ENCODE measurements at regions of chr5 and their contacts with region 1.

Region 1: DNA sequence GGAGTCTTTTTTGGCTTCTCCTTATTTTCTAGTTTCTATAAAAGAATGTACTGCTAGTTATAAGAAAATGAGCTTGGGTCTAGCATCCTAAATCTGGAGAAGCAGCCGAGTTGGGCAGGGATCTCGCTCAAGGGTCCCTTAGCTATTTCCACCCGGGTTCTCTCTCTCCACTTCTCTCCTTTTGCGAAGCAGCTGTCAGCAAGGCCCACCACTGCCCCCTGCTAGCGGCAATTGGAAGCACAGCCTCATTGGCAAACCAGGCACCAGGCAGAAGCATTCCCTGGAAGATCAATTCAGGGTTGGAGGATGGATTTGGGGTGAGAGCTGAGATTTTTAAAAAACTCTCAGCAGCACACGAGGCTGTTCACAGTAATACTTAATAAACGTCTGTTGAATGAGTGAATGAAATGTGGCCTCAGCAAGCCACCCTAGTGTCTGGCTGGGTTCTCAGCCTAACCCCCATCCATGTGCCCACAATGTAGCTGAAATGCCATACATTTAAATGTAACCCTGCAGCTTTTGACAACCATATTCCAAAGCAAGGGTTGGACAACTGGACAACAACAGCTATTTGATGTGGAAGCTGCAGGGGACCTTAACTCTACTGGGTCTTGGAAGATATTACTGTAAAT is 34.6 kb upstream of the TNIP1 start:
- DNase-seq: peak; percentile 84
- H3K4me3 Mint-ChIP-seq: no peak overlapping the region
- H3K27ac Mint-ChIP-seq: no peak overlapping the region
- H3K4me1 Mint-ChIP-seq: peaks cover 3% of the 10 kb centered on the region
- H3K27me3 Mint-ChIP-seq: no peaks in the 10 kb centered on the region

Region 2: DNA sequence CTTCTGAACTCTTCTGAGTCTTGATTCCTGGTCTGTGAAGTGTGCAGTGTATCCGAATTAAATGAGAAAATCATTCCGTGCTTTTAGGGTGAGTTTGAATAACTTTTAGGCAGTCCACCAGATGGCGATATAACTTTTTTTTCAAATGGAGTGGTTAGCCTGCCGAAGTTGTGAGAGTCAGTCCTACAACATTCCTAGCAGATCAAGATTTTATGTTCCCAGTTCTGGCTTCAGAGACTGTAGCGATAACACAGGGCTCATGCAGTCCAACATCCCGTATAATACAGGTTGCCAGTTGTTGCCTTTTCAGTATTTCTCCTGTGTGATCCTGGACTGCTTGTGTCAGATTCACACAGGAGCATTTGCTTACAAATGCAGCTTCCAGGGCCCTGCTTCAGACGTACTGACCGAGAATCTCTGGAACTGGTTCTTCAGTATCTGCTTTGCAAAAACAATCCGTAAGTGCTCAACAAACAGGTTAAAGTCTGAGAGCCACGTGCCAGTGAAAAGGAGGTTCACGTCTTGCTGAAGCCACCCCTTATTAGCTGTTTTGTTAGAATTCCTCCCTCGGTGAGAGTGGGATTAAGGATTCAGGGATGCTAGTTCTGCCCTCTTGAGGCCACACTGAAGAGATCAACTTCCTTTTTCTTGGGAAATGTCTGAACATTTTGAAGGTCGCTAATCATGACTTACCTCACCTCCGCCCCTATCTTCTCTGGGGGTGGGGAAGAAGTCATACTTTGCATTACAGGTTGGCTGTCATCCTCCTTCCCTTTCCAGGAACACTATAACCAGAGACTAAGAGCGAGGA is 314.1 kb before region 1 on chr5:
- CTCF ChIA-PET with region 1: interaction called, 5 read pairs
- intact Hi-C with region 1: loop called (anchors 1 kb)
- DNase-seq: peak; percentile 31
- H3K4me3 Mint-ChIP-seq: no peak overlapping the region
- H3K27ac Mint-ChIP-seq: no peak overlapping the region
- H3K4me1 Mint-ChIP-seq: peaks cover 31% of the 10 kb centered on the region
- H3K27me3 Mint-ChIP-seq: no peaks in the 10 kb centered on the region

Region 3: GRCh38 chr5:151040211-151040747 is 75.1 kb before region 1 on chr5:
- CTCF ChIA-PET with region 1: interaction called, 13 read pairs
- intact Hi-C with region 1: no loop called
- DNase-seq: no peak
- H3K4me3 Mint-ChIP-seq: no peak overlapping the region
- H3K27ac Mint-ChIP-seq: no peak overlapping the region
- H3K4me1 Mint-ChIP-seq: peaks cover 11% of the 10 kb centered on the region
- H3K27me3 Mint-ChIP-seq: no peaks in the 10 kb centered on the region

Region 4: GRCh38 chr5:151068433-151069197 is 46.8 kb before region 1 on chr5:
- CTCF ChIA-PET with region 1: interaction called, 19 read pairs
- intact Hi-C with region 1: no loop called
- DNase-seq: peak; percentile 46
- H3K4me3 Mint-ChIP-seq: peak overlapping the region; percentile 12
- H3K27ac Mint-ChIP-seq: peak overlapping the region; percentile 77
- H3K4me1 Mint-ChIP-seq: peaks cover 93% of the 10 kb centered on the region
- H3K27me3 Mint-ChIP-seq: no peaks in the 10 kb centered on the region

Region 5: DNA sequence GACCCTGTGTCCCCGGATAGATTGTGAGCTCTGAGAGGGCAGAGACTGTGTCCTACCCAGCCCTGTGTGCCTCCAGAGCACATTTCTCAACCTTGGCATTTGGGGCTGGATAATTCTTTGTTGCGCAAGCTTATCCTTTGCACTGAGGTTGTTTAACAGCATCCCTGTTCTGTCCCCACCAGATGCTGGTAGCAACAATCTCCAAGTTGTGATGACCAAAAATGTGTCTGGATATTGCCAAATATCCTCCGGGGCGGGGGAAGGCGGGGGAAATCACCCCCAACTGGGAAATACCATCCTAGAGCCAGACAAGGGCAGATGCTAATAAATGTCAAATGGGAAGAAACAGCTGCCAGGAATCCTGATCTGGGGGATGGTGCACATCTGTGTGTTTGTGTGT is 10.6 kb before region 1 on chr5:
- CTCF ChIA-PET with region 1: interaction called, 53 read pairs
- intact Hi-C with region 1: no loop called
- DNase-seq: no peak
- H3K4me3 Mint-ChIP-seq: no peak overlapping the region
- H3K27ac Mint-ChIP-seq: peak overlapping the region; percentile 68
- H3K4me1 Mint-ChIP-seq: peaks cover under 1% of the 10 kb centered on the region
- H3K27me3 Mint-ChIP-seq: no peaks in the 10 kb centered on the region

Region 6: GRCh38 chr5:151150471-151151262 is 35.3 kb after region 1 on chr5:
- CTCF ChIA-PET with region 1: interaction called, 18 read pairs
- intact Hi-C with region 1: no loop called
- DNase-seq: peak; percentile 91
- H3K4me3 Mint-ChIP-seq: peak overlapping the region; percentile 64
- H3K27ac Mint-ChIP-seq: peak overlapping the region; percentile 90
- H3K4me1 Mint-ChIP-seq: peaks cover 94% of the 10 kb centered on the region
- H3K27me3 Mint-ChIP-seq: no peaks in the 10 kb centered on the region